ENCODE measurements at regions of chr4 and their contacts with region 1.

Region 1: DNA sequence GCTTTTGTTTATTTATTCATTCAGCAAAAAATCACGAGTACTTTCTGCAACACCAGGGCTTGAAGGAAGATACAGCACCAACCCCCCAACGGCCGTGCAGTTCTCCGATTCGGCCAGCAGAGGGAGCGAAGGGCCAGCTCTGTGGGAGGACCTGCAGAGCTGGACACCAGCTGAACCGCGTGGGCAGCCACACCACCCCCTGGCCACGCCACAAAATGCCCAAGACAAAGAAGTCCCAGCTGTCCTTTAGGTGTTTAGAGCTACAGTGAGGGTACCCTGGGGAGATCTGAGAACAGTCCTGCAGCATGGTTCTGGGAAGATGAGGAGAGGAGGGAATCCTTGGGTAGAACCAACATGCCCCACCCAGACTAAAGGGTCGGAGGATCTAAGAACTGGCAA is 83.1 kb downstream of the RELL1 start:
- DNase-seq: peak; percentile 39 to 65 (median 55)
- H3K4me3 ChIP-seq: peak overlapping the region in 1 of 7 experiments; percentile 6
- H3K27ac ChIP-seq: no peak overlapping the region
- H3K4me1 ChIP-seq: peaks cover 0 to 3% (median 0%) of the 10 kb centered on the region in 4 experiments
- H3K27me3 ChIP-seq: no peaks in the 10 kb centered on the region

Region 2: DNA sequence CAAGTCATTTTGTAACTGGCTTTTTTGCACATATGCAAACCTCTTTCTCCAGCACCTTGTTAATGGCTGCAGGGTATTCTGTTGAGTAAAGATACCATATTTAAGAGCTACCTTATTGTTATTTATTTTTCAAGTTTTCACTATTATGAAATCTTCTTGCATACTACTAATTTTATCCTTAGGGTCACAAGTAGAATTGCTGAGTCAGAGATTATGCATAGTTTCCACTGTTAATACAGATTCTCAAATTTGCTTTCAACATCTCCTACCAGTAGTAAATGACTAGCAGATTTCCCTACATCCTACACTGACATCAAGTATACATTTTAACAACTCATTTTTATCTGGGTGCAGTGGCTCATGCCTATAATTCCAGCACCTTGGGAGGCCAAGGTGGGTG is 29.5 kb before region 1 on chr4:
- CTCF ChIA-PET with region 1: no interaction called
- POLR2A ChIA-PET with region 1: no interaction called
- DNase-seq: no peak
- H3K4me3 ChIP-seq: no peak overlapping the region
- H3K27ac ChIP-seq: no peak overlapping the region
- H3K4me1 ChIP-seq: no peaks in the 10 kb centered on the region
- H3K27me3 ChIP-seq: peaks cover 0 to 2% (median 0%) of the 10 kb centered on the region in 5 experiments

Region 3: GRCh38 chr4:37615059-37615719 is 12.1 kb after region 1 on chr4:
- CTCF ChIA-PET with region 1: interaction called, 27 read pairs
- POLR2A ChIA-PET with region 1: no interaction called
- DNase-seq: no peak
- H3K4me3 ChIP-seq: no peak overlapping the region
- H3K27ac ChIP-seq: no peak overlapping the region
- H3K4me1 ChIP-seq: no peaks in the 10 kb centered on the region
- H3K27me3 ChIP-seq: no peaks in the 10 kb centered on the region

Region 4: GRCh38 chr4:37623125-37623524 is 20.1 kb after region 1 on chr4:
- CTCF ChIA-PET with region 1: interaction called, 12 read pairs
- POLR2A ChIA-PET with region 1: no interaction called
- DNase-seq: no peak
- H3K4me3 ChIP-seq: no peak overlapping the region
- H3K27ac ChIP-seq: no peak overlapping the region
- H3K4me1 ChIP-seq: no peaks in the 10 kb centered on the region
- H3K27me3 ChIP-seq: no peaks in the 10 kb centered on the region

Region 5: DNA sequence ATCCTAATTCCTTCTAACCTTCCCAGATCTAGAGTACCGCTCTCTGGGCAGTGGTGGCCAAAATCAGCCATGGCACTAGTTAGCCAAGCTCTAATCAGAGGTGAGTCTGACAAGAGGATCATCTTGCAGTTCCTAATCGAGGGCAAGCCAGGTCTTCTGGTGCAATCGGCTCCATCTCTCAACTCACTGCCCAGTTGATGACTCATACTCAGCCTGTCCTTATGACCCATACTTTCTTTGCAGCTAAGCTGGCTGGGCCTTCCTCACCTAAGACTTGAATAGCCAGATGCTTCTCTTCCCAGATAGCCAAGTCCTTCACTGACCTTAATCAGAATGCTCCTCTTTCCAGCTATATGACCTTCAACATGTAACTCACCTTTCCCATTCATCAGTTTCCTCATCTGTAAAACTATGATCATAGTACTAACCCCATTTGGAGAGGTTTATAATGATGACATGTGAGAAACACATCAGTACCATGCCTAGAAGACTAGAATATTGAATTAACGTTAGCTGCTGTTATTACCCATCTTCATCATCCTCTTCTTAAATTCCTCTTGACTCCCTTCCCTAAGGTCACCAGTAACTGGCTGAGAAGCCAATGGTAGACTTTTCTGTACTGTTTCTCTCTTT is 26.0 kb after region 1 on chr4:
- CTCF ChIA-PET with region 1: interaction called, 12 read pairs
- POLR2A ChIA-PET with region 1: no interaction called
- DNase-seq: no peak
- H3K4me3 ChIP-seq: no peak overlapping the region
- H3K27ac ChIP-seq: no peak overlapping the region
- H3K4me1 ChIP-seq: no peaks in the 10 kb centered on the region
- H3K27me3 ChIP-seq: no peaks in the 10 kb centered on the region

Region 6: DNA sequence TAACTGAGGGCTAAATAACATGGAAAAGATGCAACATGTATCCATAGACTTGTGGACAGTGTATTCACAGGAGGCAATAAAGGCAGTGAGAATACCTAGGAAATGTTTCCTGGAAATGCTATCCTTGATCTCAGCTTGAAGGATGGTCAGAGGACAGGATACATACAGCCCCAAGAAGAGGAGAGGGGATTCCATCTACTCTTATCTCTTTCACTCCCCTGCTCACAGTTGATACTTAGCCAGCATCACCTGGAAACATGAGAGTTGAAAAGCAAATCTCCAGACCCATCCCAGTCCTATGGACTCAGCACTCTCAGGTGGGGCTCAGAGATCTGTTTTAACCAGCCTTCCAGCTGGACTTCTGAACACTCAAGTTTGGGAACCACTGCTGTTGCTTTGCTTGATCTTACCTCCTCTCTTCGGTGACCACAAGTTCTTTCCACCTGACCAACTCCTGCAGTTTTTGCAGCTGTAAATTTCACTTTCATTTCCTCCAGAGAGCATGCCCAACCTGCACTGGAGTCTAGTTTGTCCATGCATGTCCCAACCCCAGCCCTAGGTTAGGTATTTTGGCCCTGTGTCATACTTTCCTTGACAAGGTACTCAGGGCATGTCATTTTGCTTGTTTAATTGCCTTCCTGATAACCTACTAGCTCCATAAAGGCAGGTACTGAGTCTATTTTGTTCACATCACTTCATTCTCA is 72.7 kb after region 1 on chr4:
- CTCF ChIA-PET with region 1: no interaction called
- POLR2A ChIA-PET with region 1: no interaction called
- DNase-seq: peak in 2 of 3 donors; percentile 59 to 61
- H3K4me3 ChIP-seq: no peak overlapping the region
- H3K27ac ChIP-seq: no peak overlapping the region
- H3K4me1 ChIP-seq: peaks cover 8 to 35% (median 19%) of the 10 kb centered on the region in 4 experiments
- H3K27me3 ChIP-seq: no peaks in the 10 kb centered on the region

Region 7: GRCh38 chr4:37780444-37781150 is 177.5 kb after region 1 on chr4:
- CTCF ChIA-PET with region 1: interaction called, 14 read pairs
- POLR2A ChIA-PET with region 1: no interaction called
- DNase-seq: peak; percentile 50 to 74 (median 71)
- H3K4me3 ChIP-seq: no peak overlapping the region
- H3K27ac ChIP-seq: no peak overlapping the region
- H3K4me1 ChIP-seq: peaks cover 4 to 16% (median 12%) of the 10 kb centered on the region in 4 experiments
- H3K27me3 ChIP-seq: no peaks in the 10 kb centered on the region

Region 8: DNA sequence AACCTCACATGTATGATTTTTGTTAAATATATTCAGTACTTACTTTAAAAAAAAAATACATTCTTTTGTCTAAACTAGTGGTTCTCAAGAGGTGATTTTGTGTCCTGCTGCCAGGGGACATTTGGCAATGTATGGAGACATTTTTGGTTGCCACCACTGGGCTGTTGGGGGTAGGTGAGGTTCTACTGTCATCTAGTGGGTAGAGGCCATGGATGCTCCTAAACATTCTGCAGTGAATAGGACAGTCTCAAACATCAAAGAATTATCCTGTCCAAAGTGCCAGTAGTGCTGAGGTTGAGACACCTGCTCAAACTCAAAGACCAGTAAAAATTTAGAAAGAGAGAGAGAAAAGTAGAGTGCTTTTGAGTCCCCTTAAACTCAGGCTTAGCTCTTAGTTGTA is 190.5 kb after region 1 on chr4:
- CTCF ChIA-PET with region 1: interaction called, 33 read pairs
- POLR2A ChIA-PET with region 1: no interaction called
- DNase-seq: peak; percentile 44 to 74 (median 71)
- H3K4me3 ChIP-seq: no peak overlapping the region
- H3K27ac ChIP-seq: no peak overlapping the region
- H3K4me1 ChIP-seq: peaks cover 0 to 3% (median 1%) of the 10 kb centered on the region in 4 experiments
- H3K27me3 ChIP-seq: no peaks in the 10 kb centered on the region

Measured in common myeloid progenitor, CD34-positive (primary cell).